ENCODE measurements at regions of chr18 and their contacts with region 1.

Region 1: GRCh38 chr18:13558124-13558523 is 168.2 kb downstream of the FAM210A start:
- DNase-seq: peak in 1 of 5 donors; percentile 37
- H3K4me3 ChIP-seq: no peak overlapping the region
- H3K4me3 Mint-ChIP-seq: no peak overlapping the region
- H3K27ac ChIP-seq: no peak overlapping the region
- H3K27ac Mint-ChIP-seq: peak overlapping the region in 1 of 8 donors; percentile 91
- H3K4me1 ChIP-seq: peaks cover 4% of the 10 kb centered on the region
- H3K4me1 Mint-ChIP-seq: peaks cover 13 to 24% (median 17%) of the 10 kb centered on the region in 3 donors
- H3K27me3 ChIP-seq: no peaks in the 10 kb centered on the region
- H3K27me3 Mint-ChIP-seq: no peaks in the 10 kb centered on the region

Region 2: GRCh38 chr18:13608810-13609532 is 50.8 kb after region 1 on chr18:
- CTCF ChIA-PET with region 1: interaction called, 12 read pairs
- POLR2A ChIA-PET with region 1: no interaction called
- DNase-seq: peak in 2 of 5 donors; percentile 33 to 68
- H3K4me3 ChIP-seq: no peak overlapping the region
- H3K4me3 Mint-ChIP-seq: peak overlapping the region; percentile 28 to 80 (median 73)
- H3K27ac ChIP-seq: no peak overlapping the region
- H3K27ac Mint-ChIP-seq: peak overlapping the region; percentile 12 to 91 (median 76)
- H3K4me1 ChIP-seq: peaks cover 37% of the 10 kb centered on the region
- H3K4me1 Mint-ChIP-seq: peaks cover 53 to 75% (median 59%) of the 10 kb centered on the region in 3 donors
- H3K27me3 ChIP-seq: no peaks in the 10 kb centered on the region
- H3K27me3 Mint-ChIP-seq: peaks cover 0 to 9% of the 10 kb centered on the region in 2 donors

Region 3: GRCh38 chr18:13629841-13630715 is 72.0 kb after region 1 on chr18:
- CTCF ChIA-PET with region 1: interaction called, 28 read pairs
- POLR2A ChIA-PET with region 1: no interaction called
- DNase-seq: peak in 3 of 5 donors; percentile 39 to 70 (median 68)
- H3K4me3 ChIP-seq: no peak overlapping the region
- H3K4me3 Mint-ChIP-seq: no peak overlapping the region
- H3K27ac ChIP-seq: no peak overlapping the region
- H3K27ac Mint-ChIP-seq: peak overlapping the region in 4 of 8 donors; percentile 2 to 66 (median 32)
- H3K4me1 ChIP-seq: no peaks in the 10 kb centered on the region
- H3K4me1 Mint-ChIP-seq: peaks cover 6 to 31% (median 15%) of the 10 kb centered on the region in 3 donors
- H3K27me3 ChIP-seq: no peaks in the 10 kb centered on the region
- H3K27me3 Mint-ChIP-seq: no peaks in the 10 kb centered on the region

Region 4: DNA sequence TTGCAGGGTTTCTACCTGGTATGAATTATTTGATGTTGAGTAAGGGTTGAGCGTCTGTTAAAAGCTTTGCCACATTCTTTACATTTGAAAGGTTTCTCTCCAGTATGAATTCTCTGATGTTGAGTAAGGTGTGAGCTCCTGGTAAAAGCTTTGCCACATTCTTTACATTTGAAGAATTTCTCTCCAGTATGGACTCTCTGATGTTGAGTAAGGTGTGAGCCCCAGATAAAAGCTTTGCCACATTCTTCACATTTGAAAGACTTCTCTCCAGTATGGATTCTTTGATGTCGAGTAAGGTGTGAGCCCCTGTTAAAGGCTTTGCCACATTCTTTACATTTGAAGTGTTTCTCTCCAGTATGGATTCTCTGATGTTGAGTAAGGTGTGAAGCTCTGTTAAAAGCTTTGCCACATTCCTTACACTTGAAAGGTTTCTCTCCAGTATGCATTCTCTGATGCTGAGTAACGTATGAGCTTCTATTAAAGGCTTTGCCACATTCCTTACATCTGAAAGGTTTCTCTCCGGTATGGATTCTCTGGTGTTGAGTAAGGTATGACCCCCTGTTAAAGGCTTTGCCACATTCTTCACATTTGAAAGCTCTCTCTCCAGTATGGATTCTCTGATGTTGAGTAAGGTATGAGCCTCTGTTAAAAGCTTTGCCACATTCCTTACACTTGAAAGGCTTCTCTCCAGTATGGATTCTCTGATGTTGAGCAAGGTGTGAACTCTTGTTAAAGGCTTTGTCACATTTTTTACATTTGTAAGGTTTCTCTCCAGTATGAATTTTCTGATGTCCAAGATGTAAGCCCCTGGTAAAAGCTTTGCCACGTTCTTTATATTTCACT is 547.0 kb after region 1 on chr18:
- CTCF ChIA-PET with region 1: no interaction called
- POLR2A ChIA-PET with region 1: no interaction called
- DNase-seq: no peak
- H3K4me3 ChIP-seq: no peak overlapping the region
- H3K4me3 Mint-ChIP-seq: no peak overlapping the region
- H3K27ac ChIP-seq: no peak overlapping the region
- H3K27ac Mint-ChIP-seq: no peak overlapping the region
- H3K4me1 ChIP-seq: no peaks in the 10 kb centered on the region
- H3K4me1 Mint-ChIP-seq: peaks cover 4 to 18% (median 7%) of the 10 kb centered on the region in 3 donors
- H3K27me3 ChIP-seq: no peaks in the 10 kb centered on the region
- H3K27me3 Mint-ChIP-seq: peaks cover 0 to 2% of the 10 kb centered on the region in 2 donors